ENCODE measurements at regions of chr3 and their contacts with region 1.

Region 1: DNA sequence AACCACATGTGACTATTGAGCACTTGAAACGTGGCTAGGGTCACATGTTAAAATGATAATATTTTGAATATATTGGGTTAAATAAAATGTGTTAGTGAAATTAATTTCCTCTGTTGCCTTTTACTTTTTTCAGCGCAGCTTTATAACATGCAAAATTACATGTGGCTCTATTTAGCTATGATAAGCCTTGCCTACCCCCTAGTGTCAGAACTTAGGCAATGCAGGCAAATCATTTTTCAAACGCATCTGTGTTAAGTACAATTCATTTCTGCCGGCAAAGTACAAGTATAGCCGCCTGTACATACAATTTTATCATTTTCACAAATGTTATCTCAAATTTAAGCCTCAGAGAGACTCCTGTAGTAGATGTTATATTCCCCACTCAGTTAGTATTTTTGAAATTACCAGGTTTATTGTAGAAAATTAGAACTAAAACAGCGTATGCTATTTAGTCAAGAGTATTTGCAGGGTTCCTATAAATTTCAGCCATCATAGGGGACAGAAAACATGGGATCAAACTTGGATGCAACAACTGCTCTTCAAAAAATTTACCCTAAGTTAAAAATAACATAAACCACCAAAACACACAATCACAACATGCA is 56.1 kb downstream of the TAFA4 start:
- DNase-seq: peak; percentile 17
- ATAC-seq: peak; percentile 91
- H3K4me3 ChIP-seq: no peak overlapping the region
- H3K27ac ChIP-seq: no peak overlapping the region
- H3K4me1 ChIP-seq: no peaks in the 10 kb centered on the region
- H3K27me3 ChIP-seq: peaks cover 0 to 3% of the 10 kb centered on the region in 2 experiments; a peak in 1 of 4 replicates
- CTCF ChIP-seq: peak; percentile 80 to 87 (median 82)
- EP300 ChIP-seq: no peak
- POLR2A ChIP-seq: no peak
- RAD21 ChIP-seq: peak; percentile 92

Region 2: DNA sequence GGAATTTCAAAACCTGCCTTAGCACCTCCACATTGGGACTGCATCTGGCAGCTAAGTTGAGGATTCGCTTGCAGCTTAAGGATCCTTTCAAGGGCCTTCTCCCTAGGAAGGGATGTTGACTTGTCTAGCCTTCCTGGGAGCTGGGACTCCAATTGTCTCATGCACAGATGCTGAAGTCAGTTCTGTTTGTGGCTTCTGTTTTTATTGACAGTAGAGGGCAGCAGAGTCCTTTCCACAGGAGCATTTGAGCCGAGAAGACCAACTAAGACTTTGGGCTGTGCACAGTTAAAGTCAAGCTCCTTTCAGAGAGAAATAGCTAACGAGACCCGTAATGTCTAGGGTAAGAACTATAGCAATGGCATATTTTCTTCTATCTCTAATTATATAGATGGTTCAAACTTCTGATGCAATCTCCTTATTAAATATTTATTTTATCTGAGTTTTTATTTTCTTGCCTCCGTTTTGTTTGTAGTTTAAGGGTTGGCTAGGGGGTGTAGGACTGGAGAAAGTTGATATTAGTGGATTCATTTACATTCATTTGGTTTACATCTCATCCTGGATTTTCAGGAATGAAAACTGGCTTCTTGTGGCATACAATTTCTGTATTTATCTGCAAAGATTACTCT is 1937.8 kb before region 1 on chr3:
- CTCF ChIA-PET with region 1: interaction called, 7 read pairs
- POLR2A ChIA-PET with region 1: no interaction called
- RAD21 ChIA-PET with region 1: interaction called, 17 read pairs
- SMC1A ChIA-PET with region 1: no interaction called
- in situ Hi-C with region 1: no loop called
- intact Hi-C with region 1: loop called (anchors 10 kb)
- DNase-seq: peak; percentile 5
- ATAC-seq: peak; percentile 92
- H3K4me3 ChIP-seq: no peak overlapping the region
- H3K27ac ChIP-seq: no peak overlapping the region
- H3K4me1 ChIP-seq: no peaks in the 10 kb centered on the region
- H3K27me3 ChIP-seq: no peaks in the 10 kb centered on the region
- CTCF ChIP-seq: peak; percentile 69 to 72 (median 72)
- EP300 ChIP-seq: no peak
- POLR2A ChIP-seq: no peak
- RAD21 ChIP-seq: peak; percentile 77

Region 3: DNA sequence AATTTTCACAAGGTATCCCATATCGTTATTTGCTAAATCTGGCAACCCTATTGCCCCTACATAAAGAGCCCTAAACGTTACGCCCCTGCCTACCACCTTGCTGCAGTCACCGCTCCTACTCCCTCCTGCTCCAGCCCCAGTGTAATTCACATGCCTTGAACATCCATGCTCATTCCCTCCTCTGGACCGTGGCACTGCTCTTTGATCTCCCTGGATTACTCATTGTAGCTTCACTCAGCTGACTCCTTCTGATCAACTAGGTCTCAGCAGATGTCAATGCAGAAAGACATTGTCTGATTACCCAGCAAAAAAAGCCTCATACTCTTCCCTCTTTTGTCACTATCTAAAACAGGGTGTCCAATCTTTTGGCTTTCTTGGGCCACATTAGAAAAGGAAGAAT is 1918.8 kb before region 1 on chr3:
- CTCF ChIA-PET with region 1: no interaction called
- POLR2A ChIA-PET with region 1: no interaction called
- RAD21 ChIA-PET with region 1: no interaction called
- SMC1A ChIA-PET with region 1: no interaction called
- in situ Hi-C with region 1: loop called (anchors 10 kb)
- intact Hi-C with region 1: no loop called
- DNase-seq: no peak
- ATAC-seq: no peak
- H3K4me3 ChIP-seq: no peak overlapping the region
- H3K27ac ChIP-seq: no peak overlapping the region
- H3K4me1 ChIP-seq: no peaks in the 10 kb centered on the region
- H3K27me3 ChIP-seq: peaks cover 0 to 6% of the 10 kb centered on the region in 2 experiments; a peak in 2 of 4 replicates
- CTCF ChIP-seq: no peak
- EP300 ChIP-seq: no peak
- POLR2A ChIP-seq: no peak
- RAD21 ChIP-seq: no peak

Region 4: GRCh38 chr3:67384760-67385397 is 1491.3 kb before region 1 on chr3:
- CTCF ChIA-PET with region 1: interaction called, 38 read pairs
- POLR2A ChIA-PET with region 1: no interaction called
- RAD21 ChIA-PET with region 1: interaction called, 4 read pairs
- SMC1A ChIA-PET with region 1: interaction called, 4 read pairs
- in situ Hi-C with region 1: no loop called
- intact Hi-C with region 1: no loop called
- DNase-seq: no peak
- ATAC-seq: peak; percentile 68
- H3K4me3 ChIP-seq: no peak overlapping the region
- H3K27ac ChIP-seq: no peak overlapping the region
- H3K4me1 ChIP-seq: peaks cover 6% of the 10 kb centered on the region; the same call in 1 of the 2 replicates
- H3K27me3 ChIP-seq: no peaks in the 10 kb centered on the region
- CTCF ChIP-seq: peak; percentile 39 to 61 (median 42)
- EP300 ChIP-seq: no peak
- POLR2A ChIP-seq: no peak
- RAD21 ChIP-seq: peak; percentile 63

Region 5: DNA sequence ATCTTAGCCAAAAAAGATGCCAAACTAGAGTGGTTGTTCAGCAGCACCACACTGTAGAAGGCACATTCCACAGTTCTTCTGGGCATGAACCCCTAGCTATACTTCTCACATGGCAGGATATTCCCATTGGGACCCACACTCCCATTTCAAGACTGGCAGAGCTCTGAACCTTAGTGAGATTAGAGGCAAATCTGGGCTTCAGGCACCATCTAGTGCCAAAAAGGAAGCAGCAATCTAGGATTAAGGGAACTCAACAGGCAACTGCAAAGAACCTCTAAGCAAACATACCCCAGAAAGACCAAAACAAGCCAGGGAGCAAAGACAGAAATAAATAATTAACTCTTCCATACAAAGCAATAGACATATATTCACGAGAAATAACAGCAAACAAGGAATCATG is 10.1 kb before region 1 on chr3:
- CTCF ChIA-PET with region 1: interaction called, 13 read pairs
- POLR2A ChIA-PET with region 1: no interaction called
- RAD21 ChIA-PET with region 1: interaction called, 5 read pairs
- SMC1A ChIA-PET with region 1: no interaction called
- in situ Hi-C with region 1: no loop called
- intact Hi-C with region 1: no loop called
- DNase-seq: no peak
- ATAC-seq: no peak
- H3K4me3 ChIP-seq: no peak overlapping the region
- H3K27ac ChIP-seq: no peak overlapping the region
- H3K4me1 ChIP-seq: no peaks in the 10 kb centered on the region
- H3K27me3 ChIP-seq: no peaks in the 10 kb centered on the region
- CTCF ChIP-seq: no peak
- EP300 ChIP-seq: no peak
- POLR2A ChIP-seq: no peak
- RAD21 ChIP-seq: no peak

Measured in GM12878 (cell line).